GM10248 (cell line): ENCODE measurements at regions of chr9 and their contacts with region 1.

Region 1: GRCh38 chr9:5582835-5583195 is 46.1 kb upstream of the RIC1 start:
- DNase-seq: peak; percentile 49
- CTCF ChIP-seq: no peak

Region 2: GRCh38 chr9:5450359-5451091 is 132.3 kb before region 1 on chr9 and contains the start of gene CD274:
- CTCF ChIA-PET with region 1: interaction called, 53 read pairs
- POLR2A ChIA-PET with region 1: interaction called, 10 read pairs
- DNase-seq: peak; percentile 75
- CTCF ChIP-seq: peak; percentile 81

Region 3: DNA sequence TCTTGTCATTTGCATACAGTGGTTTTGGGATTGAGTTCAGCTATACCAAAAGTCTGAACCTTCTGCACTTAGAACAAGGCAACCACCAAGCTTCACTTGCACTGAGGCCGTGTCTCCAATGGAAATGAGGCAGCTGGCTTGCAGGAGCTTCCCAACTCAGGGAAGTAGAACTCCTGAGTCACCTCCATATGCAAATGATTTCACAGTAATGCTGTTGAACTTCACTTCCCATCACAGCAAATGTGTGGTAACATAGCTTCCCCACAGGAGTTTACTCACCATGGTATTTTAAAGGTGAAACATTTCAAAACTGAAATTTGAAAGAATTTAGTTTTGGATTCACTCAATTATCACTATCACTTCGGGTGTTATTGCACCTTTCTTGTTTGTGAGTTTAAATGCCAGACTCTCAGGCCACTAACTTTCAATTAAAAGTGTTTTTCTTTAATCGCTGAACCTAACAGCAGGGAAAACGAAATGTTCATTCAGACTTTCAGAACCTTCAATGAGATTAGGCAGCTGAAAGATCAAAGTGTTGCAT is 123.5 kb before region 1 on chr9:
- CTCF ChIA-PET with region 1: interaction called, 42 read pairs
- POLR2A ChIA-PET with region 1: interaction called, 8 read pairs
- DNase-seq: no peak
- CTCF ChIP-seq: no peak

Region 4: DNA sequence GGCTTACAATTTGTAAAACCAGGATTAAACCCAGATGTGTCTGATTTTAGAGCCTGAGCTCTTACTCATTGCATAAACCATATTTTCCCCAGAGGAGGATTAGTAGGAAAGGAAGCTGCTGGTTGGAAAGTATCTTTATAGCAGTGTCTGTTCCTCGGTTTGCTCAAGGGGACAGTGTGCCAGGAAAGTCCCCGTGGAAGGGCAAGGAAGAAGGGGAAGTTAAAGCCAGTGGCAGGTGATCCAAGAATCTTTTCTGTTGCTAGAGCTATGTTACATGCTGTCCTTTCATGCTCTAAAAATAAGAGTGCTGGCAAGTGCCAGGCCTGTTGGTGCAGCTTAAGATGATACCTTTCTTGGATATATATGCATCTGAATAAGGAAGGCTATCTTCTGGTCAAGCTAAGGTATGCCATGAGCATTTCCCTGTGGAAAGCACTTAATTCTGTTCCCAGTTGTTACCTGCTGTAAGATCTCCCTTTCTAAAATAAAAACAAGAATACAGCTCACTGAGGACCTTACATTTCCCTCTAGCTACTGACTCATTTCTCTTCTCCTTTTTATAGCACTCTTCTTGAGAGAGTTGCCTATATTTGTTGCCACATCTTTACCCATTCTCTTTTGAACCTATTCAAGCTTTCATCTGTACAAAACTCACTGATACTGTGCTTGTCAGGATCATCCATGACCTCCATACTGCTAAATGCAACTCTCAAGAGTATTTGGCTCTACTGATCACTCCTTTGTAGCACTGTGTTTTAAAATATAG is 64.5 kb before region 1 on chr9:
- CTCF ChIA-PET with region 1: interaction called, 11 read pairs
- POLR2A ChIA-PET with region 1: interaction called, 5 read pairs
- DNase-seq: peak; percentile 49
- CTCF ChIP-seq: no peak

Region 5: GRCh38 chr9:5529683-5530221 is 53.1 kb before region 1 on chr9:
- CTCF ChIA-PET with region 1: interaction called, 11 read pairs
- POLR2A ChIA-PET with region 1: no interaction called
- DNase-seq: no peak
- CTCF ChIP-seq: no peak

Region 6: DNA sequence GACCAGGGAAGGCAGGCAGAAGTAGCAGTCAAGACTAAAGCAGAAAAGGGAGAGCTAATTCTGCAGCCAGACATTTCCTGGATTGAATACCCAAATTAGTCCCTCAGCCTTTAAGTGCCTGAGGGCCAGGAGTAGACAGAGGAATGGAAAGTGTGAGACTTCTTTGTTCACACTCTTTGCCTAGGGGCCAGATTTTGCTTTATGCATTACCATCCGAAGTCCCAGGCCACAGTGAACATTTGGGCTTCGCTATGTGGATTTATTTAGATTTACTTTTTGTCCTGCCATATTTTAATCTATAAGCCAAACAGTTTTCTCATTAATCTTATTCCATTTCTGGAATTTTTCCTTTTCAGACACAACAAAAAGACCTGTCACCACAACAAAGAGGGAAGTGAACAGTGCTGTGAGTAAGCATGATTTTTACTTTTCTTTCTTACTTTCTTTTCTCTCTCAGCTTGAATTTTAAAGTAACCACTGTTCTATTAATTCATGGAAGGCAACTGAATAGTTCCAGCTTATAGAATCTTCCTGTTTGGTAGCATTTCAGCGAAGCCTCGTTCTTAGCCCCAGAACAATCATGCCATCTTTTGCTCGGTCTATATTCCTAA is 19.9 kb before region 1 on chr9:
- CTCF ChIA-PET with region 1: interaction called, 13 read pairs
- POLR2A ChIA-PET with region 1: no interaction called
- DNase-seq: no peak
- CTCF ChIP-seq: no peak

Region 7: DNA sequence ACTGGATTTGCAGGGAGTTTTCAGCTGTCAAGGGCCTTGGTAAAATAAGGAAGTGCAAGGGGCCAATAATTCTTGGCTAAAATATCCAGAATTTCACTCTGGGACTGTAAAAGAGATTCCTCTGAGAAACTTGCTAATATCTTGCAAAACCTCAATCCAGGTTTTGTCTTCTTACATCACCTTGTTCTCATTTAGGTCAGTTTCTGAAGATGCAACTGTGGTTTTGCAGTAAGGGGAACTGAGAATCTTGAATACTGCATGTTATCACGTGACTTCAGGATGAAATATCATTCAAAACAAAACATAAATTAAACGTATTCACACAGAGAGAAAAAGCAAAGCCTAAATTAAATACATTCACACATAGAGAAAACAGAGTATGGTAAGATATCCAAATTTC is 11.1 kb after region 1 on chr9:
- CTCF ChIA-PET with region 1: interaction called, 18 read pairs
- POLR2A ChIA-PET with region 1: interaction called, 4 read pairs
- DNase-seq: peak; percentile 58
- CTCF ChIP-seq: no peak